Naive thymus-derived CD4-positive, alpha-beta T cell (primary cell): ENCODE measurements at regions of chr7 and their contacts with region 1.

Region 1: GRCh38 chr7:131166066-131166465 is 161.6 kb upstream of the MKLN1 start:
- DNase-seq: no peak
- ATAC-seq: no peak
- H3K4me3 ChIP-seq: no peak overlapping the region
- H3K4me3 Mint-ChIP-seq: no peak overlapping the region
- H3K27ac ChIP-seq: no peak overlapping the region
- H3K27ac Mint-ChIP-seq: no peak overlapping the region
- H3K4me1 ChIP-seq: no peaks in the 10 kb centered on the region
- H3K4me1 Mint-ChIP-seq: no peaks in the 10 kb centered on the region
- H3K27me3 ChIP-seq: peaks cover 0 to 3% of the 10 kb centered on the region in 2 donors
- H3K27me3 Mint-ChIP-seq: peaks cover 0 to 11% (median 3%) of the 10 kb centered on the region in 5 donors

Region 2: DNA sequence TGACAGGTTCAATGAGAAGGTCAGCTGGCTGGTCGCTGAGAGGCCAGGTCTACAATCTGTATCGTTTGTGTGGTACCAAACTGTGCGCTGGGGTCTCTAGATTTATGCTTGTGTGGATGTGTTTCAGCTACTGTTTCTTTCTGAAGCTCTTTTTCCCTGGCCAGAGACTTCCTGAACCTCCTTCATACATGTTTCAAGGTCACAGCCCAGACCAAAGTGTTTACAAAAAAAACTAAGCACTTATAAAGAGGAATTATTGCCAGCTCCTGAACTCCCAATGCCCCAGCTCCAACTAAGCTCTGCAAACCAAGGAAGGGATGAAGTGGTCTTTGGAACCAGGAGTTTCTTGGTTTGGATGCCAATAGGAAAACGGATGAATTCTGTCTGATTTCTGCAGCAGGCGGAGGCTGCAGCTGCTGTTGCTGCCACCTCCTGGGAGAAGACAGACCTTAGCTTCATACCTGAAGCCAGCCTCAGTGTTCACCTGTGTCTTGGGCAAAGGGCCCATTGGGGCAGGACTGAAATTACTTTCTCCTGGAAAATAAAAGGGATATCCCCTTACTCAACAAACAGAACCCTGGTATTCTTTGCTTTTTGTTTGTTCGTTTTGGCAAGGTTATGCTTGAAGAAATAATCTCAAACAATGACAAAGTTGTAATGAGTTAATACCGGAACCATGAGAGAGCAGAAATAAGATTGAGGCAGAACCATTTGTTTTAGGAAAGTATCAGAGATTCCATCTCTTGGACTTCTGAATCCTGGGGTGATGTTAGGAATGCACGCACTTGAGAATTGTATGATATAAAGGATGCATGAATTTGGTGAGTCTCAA is 137.0 kb after region 1 on chr7:
- CTCF ChIA-PET with region 1: no interaction called
- POLR2A ChIA-PET with region 1: no interaction called
- intact Hi-C with region 1: loop called in 1 of 2 experiments (anchors 5 kb)
- DNase-seq: peak in 6 of 9 donors; percentile 16 to 34 (median 24)
- ATAC-seq: peak; percentile 45
- H3K4me3 ChIP-seq: no peak overlapping the region
- H3K4me3 Mint-ChIP-seq: no peak overlapping the region
- H3K27ac ChIP-seq: no peak overlapping the region
- H3K27ac Mint-ChIP-seq: peak overlapping the region in 1 of 9 donors; percentile 68
- H3K4me1 ChIP-seq: no peaks in the 10 kb centered on the region
- H3K4me1 Mint-ChIP-seq: no peaks in the 10 kb centered on the region
- H3K27me3 ChIP-seq: no peaks in the 10 kb centered on the region
- H3K27me3 Mint-ChIP-seq: peaks cover 0 to 4% (median 0%) of the 10 kb centered on the region in 5 donors